Heart left ventricle (tissue), 16 donors: ENCODE measurements at regions of chr12 and their contacts with region 1.

Region 1: DNA sequence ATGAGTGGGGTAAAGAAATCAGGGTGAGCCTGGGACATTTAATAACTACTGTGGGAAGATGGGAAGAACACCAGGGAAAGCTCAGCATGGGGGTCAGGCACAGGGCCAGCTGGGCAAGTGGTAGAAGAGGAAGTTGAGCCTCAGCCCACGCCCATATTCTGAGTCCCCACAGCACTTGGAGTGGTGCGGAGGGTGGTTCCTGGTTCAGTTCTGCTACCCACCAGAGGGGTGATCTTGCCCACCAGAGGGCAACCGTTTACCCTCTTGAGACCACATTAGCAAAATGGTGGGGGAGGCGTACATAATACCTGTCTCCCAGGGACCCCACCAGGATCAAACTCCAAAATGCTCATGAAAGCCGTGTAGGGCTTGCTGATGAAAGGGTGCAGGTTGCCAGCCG is 16.8 kb upstream of the ANKRD33 start:
- DNase-seq: peak in 4 of 5 donors; percentile 51 to 79 (median 62)
- ATAC-seq: peak in 2 of 4 donors; percentile 49 to 60
- H3K4me3 ChIP-seq: no peak overlapping the region
- H3K27ac ChIP-seq: no peak overlapping the region
- H3K4me1 ChIP-seq: peaks cover 0 to 32% (median 10%) of the 10 kb centered on the region in 12 donors
- H3K27me3 ChIP-seq: peaks cover 0 to 18% (median 8%) of the 10 kb centered on the region in 9 donors
- CTCF ChIP-seq: no peak
- POLR2A ChIP-seq: no peak

Region 2: GRCh38 chr12:51424662-51425438 is 446.3 kb before region 1 on chr12 and contains the start of gene SLC4A8:
- intact Hi-C with region 1: loop called in 9 of 10 experiments (anchors 2 to 10 kb)
- DNase-seq: peak; percentile 84 to 90 (median 86)
- ATAC-seq: peak; percentile 81 to 96 (median 94)
- H3K4me3 ChIP-seq: peak within 1 kb of the TSS; percentile 6 to 72 (median 62)
- H3K27ac ChIP-seq: no peak within 1 kb of the TSS
- H3K4me1 ChIP-seq: peaks cover 0 to 12% (median 9%) of the 10 kb centered on the region in 12 donors
- H3K27me3 ChIP-seq: peaks cover 0 to 17% (median 0%) of the 10 kb centered on the region in 9 donors
- CTCF ChIP-seq: peak; percentile 51 to 85 (median 74)
- POLR2A ChIP-seq: no peak
- total RNA-seq, gene SLC4A8: 0.13 to 3.6 (median 0.56) TPM

Region 3: GRCh38 chr12:51531978-51532497 is 339.1 kb before region 1 on chr12:
- intact Hi-C with region 1: loop called in 2 of 10 experiments (anchors 5 to 10 kb)
- DNase-seq: peak in 4 of 5 donors; percentile 55 to 68 (median 64)
- ATAC-seq: peak; percentile 61 to 93 (median 86)
- H3K4me3 ChIP-seq: no peak overlapping the region
- H3K27ac ChIP-seq: no peak overlapping the region
- H3K4me1 ChIP-seq: peaks cover 0 to 3% (median 0%) of the 10 kb centered on the region in 12 donors
- H3K27me3 ChIP-seq: peaks cover 0 to 34% (median 14%) of the 10 kb centered on the region in 9 donors
- CTCF ChIP-seq: peak; percentile 77 to 89 (median 84)
- POLR2A ChIP-seq: no peak

Region 4: DNA sequence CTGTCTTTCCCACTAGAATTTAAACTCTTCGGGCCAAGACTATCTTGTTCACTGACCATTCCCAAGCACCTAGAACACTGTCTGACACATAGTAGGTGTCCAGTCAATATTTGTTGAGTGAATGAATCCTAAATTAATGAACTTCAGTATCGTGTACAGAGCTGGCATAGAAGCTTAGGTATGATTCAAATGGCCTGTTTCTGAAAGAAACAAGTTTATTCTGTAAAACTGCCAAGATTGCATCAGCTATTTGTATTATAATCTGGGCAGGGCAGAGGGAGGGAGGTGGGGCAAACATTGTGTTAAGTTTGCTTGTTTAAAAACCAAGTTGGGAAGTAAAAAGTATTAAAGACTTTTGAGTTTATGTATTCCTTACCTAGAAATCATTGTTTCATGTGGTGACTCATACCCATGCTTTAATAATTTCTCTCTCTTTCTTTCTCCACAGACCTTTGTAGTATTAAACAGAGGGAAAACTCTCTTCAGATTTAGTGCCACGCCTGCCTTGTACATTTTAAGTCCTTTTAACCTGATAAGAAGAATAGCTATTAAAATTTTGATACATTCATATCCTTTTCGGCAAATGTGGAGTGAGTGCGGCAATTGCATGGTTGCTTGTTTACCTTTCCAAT is 187.3 kb before region 1 on chr12:
- intact Hi-C with region 1: loop called in 1 of 10 experiments (anchors 10 kb)
- DNase-seq: no peak
- ATAC-seq: peak in 2 of 4 donors; percentile 34 to 37
- H3K4me3 ChIP-seq: no peak overlapping the region
- H3K27ac ChIP-seq: peak overlapping the region in 1 of 12 donors; percentile 38
- H3K4me1 ChIP-seq: no peaks in the 10 kb centered on the region
- H3K27me3 ChIP-seq: no peaks in the 10 kb centered on the region
- CTCF ChIP-seq: no peak
- POLR2A ChIP-seq: no peak

Region 5: GRCh38 chr12:51752234-51752889 is 118.8 kb before region 1 on chr12:
- intact Hi-C with region 1: no loop called
- DNase-seq: peak; percentile 62 to 82 (median 67)
- ATAC-seq: peak; percentile 93 to 98 (median 95)
- H3K4me3 ChIP-seq: no peak overlapping the region
- H3K27ac ChIP-seq: peak overlapping the region in 6 of 12 donors; percentile 24 to 72 (median 46)
- H3K4me1 ChIP-seq: peaks cover 0 to 14% (median 0%) of the 10 kb centered on the region in 12 donors
- H3K27me3 ChIP-seq: no peaks in the 10 kb centered on the region
- CTCF ChIP-seq: no peak
- POLR2A ChIP-seq: no peak

Region 6: GRCh38 chr12:51814311-51815088 is 56.6 kb before region 1 on chr12:
- intact Hi-C with region 1: loop called in 3 of 10 experiments (anchors 5 to 10 kb)
- DNase-seq: peak; percentile 77 to 91 (median 85)
- ATAC-seq: peak; percentile 70 to 90 (median 88)
- H3K4me3 ChIP-seq: peak overlapping the region; percentile 44 to 83 (median 65)
- H3K27ac ChIP-seq: peak overlapping the region; percentile 80 to 94 (median 86)
- H3K4me1 ChIP-seq: peaks cover 0 to 19% (median 8%) of the 10 kb centered on the region in 12 donors
- H3K27me3 ChIP-seq: peaks cover 0 to 10% (median 2%) of the 10 kb centered on the region in 9 donors
- CTCF ChIP-seq: peak; percentile 27 to 85 (median 62)
- POLR2A ChIP-seq: peak in 1 of 2 donors; percentile 42

Region 7: GRCh38 chr12:51823875-51824565 is 47.1 kb before region 1 on chr12:
- intact Hi-C with region 1: loop called in 4 of 10 experiments (anchors 5 to 10 kb)
- DNase-seq: no peak
- ATAC-seq: peak; percentile 38 to 55 (median 44)
- H3K4me3 ChIP-seq: no peak overlapping the region
- H3K27ac ChIP-seq: no peak overlapping the region
- H3K4me1 ChIP-seq: peaks cover 0 to 35% (median 5%) of the 10 kb centered on the region in 12 donors
- H3K27me3 ChIP-seq: peaks cover 0 to 22% (median 5%) of the 10 kb centered on the region in 9 donors
- CTCF ChIP-seq: peak; percentile 23 to 62 (median 48)
- POLR2A ChIP-seq: no peak

Region 8: DNA sequence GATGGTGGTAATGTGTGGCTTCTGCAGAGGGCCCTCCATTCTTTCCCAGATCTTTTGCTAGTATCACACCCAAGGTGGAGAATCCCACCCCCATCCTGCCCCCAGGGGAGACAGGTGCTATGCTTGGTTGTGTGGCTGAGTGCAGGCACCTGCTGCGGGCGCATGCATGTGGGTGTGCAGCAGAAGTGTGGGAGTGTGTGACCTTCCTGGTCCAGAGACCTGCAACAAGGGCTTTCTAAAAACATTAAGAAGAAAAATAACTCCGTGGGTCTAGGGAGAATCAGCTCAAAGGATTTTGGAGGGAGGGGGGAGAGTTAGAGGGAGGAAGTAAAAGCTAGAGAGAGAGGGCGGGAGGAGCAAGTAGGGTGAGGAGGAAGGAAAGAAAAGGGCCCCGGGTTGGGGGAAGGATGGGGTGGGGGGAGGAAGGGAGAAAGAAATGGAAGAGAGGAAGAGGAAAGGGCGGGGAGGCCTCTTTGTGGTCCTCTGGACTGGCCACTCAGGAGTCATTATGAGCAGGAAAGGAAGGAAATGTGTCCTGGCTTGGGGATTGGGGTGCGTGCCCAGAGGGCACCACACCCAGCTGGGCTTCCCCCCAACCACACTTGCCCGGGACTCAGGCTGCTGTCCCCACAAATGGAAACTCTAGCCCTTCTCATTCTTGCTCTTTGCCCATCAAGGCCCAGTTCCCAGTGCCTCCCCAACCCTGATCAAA is 19.6 kb before region 1 on chr12:
- intact Hi-C with region 1: loop called in 1 of 10 experiments (anchors 2 kb)
- DNase-seq: peak in 3 of 5 donors; percentile 34 to 50 (median 42)
- ATAC-seq: peak; percentile 9 to 44 (median 28)
- H3K4me3 ChIP-seq: no peak overlapping the region
- H3K27ac ChIP-seq: peak overlapping the region in 10 of 12 donors; percentile 17 to 82 (median 60)
- H3K4me1 ChIP-seq: peaks cover 0 to 53% (median 36%) of the 10 kb centered on the region in 12 donors
- H3K27me3 ChIP-seq: peaks cover 0 to 33% (median 14%) of the 10 kb centered on the region in 9 donors
- CTCF ChIP-seq: no peak
- POLR2A ChIP-seq: no peak

Region 9: GRCh38 chr12:52629281-52630007 is 758.3 kb after region 1 on chr12:
- intact Hi-C with region 1: no loop called
- DNase-seq: no peak
- ATAC-seq: no peak
- H3K4me3 ChIP-seq: no peak overlapping the region
- H3K27ac ChIP-seq: no peak overlapping the region
- H3K4me1 ChIP-seq: peaks cover 0 to under 1% (median 0%) of the 10 kb centered on the region in 12 donors
- H3K27me3 ChIP-seq: peaks cover 0 to 14% (median 0%) of the 10 kb centered on the region in 9 donors
- CTCF ChIP-seq: no peak
- POLR2A ChIP-seq: no peak